ENCODE measurements at regions of chr13 and their contacts with region 1.

Region 1: DNA sequence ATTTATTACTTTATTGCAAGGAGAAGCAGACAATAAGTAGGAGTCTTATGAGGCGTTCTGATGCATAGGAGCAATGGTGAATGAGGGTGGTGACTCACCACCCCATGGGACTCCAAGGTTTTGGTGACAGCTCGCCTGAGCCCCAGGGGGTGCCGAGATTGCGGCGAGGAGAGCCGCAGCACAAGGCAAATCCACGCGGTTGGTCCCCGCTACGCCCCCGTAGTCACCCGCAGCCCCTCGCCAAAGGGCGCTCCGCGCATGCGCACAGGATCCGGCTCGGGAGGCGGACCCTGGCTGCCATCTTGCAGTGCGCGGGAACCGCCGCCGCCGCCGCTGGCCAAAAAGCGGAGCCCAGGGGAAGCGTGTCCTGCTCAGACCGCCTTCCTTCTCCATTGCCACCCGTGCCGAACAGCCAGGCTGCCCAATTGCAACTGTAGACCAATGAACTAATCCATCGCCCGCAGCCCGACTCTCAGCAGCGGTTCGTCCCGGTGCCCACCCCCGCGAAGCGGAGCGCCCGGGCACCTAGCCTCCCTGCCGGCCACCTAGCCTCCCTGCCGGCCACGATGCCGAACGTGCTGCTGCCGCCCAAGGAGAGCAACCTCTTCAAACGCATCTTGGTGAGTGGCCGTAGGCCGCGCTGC is at the start of gene NAA16:
- DNase-seq: peak; percentile 86
- H3K4me3 Mint-ChIP-seq: peak within 1 kb of the TSS; percentile 93
- H3K27ac Mint-ChIP-seq: peak within 1 kb of the TSS; percentile 86
- H3K4me1 Mint-ChIP-seq: peaks cover 13% of the 10 kb centered on the region
- H3K27me3 Mint-ChIP-seq: no peaks in the 10 kb centered on the region
- CTCF ChIP-seq: no peak
- total RNA-seq, gene NAA16: 13.8 and 14.2 TPM in 2 replicates

Region 2: DNA sequence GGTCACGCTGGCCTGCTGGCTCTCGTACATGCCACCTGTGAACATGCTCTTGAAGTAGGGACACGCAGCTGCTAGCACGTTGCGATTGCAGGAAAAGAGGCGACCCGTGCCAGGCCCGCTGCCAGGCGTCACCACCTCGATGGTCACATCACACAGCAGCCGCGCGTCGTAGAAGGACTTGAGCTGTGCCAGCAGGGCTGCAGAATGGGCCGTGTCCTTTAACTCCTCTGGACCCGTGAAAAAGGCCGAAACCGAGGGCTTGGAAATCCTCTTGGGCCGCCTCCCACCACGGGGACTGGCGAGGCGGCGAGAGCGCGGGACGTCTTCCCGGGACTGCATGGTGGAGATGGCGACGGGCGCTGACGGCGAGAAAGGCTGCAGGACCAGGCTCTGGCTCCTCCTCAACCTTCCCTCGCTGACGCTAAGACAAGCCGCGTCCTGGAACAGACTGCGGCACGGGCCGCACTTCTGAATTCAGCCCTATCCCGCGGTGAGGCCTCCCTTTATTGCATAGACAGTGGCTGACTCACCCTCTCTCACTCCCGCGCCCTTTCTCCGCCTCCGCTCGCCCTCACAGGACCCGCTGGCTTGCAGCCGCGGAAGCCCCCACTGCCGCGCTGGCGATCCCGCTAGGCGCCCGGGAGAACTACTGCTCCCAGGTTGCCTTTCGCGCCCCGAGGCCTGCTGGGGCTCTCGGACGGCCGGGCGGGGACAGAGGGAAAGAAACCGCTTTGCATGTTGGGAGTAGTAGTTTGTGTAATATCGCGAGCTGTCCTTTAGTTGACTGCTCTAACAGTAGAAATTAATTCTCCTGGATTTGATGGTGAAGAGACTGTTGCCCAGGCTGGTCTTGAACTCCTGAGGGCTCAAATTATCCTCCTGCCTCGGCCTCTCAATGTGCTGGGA is 116.9 kb before region 1 on chr13 and contains the start of gene KBTBD7:
- CTCF ChIA-PET with region 1: no interaction called
- POLR2A ChIA-PET with region 1: no interaction called
- intact Hi-C with region 1: no loop called
- DNase-seq: peak; percentile 84
- H3K4me3 Mint-ChIP-seq: peak within 1 kb of the TSS; percentile 81
- H3K27ac Mint-ChIP-seq: peak within 1 kb of the TSS; percentile 83
- H3K4me1 Mint-ChIP-seq: peaks cover 10% of the 10 kb centered on the region
- H3K27me3 Mint-ChIP-seq: no peaks in the 10 kb centered on the region
- CTCF ChIP-seq: no peak
- total RNA-seq, gene KBTBD7: 1.4 and 1.8 TPM in 2 replicates

Region 3: GRCh38 chr13:41222259-41222852 is 88.7 kb before region 1 on chr13:
- CTCF ChIA-PET with region 1: no interaction called
- POLR2A ChIA-PET with region 1: no interaction called
- intact Hi-C with region 1: loop called (anchors 5 kb)
- DNase-seq: peak; percentile 75
- H3K4me3 Mint-ChIP-seq: no peak overlapping the region
- H3K27ac Mint-ChIP-seq: no peak overlapping the region
- H3K4me1 Mint-ChIP-seq: peaks cover 7% of the 10 kb centered on the region
- H3K27me3 Mint-ChIP-seq: no peaks in the 10 kb centered on the region
- CTCF ChIP-seq: peak; percentile 71

Region 4: DNA sequence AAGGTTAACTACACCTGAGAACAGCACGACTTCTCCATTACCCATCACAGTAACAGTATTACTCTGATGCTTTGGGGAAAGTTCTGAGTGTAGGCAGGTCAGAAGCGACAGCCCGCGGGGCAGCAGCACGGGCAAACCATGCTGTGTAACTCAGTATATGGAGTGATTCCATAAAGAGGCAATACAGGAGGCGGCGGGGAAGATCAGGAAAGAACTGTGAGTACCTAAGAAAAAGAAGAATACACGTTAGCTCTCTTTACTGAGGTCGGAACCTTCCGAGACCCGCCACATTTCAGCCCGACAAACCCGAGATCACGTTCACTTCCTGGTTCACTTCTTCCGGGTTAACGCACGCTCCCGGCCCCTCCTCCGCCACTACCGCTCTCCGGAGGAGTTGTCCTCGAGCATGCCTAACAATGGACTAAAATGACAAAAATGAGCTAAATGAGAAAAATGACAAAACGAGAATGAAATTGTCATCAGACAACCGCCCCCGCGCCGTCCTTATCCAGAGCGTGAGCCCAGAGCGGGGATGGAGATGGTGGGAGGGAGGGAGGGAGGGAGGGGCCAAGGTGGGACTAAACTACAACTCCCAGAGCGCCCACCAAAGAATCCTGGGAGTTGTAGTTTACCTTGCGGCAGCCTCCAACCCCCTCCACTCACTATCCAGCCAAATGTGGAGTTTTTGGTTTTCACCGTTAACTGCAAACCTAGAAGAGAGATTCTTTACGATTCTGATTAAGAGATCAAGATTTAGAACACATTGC is 47.6 kb before region 1 on chr13 and contains the start of gene MTRF1:
- CTCF ChIA-PET with region 1: no interaction called
- POLR2A ChIA-PET with region 1: interaction called, 18 read pairs
- intact Hi-C with region 1: loop called (anchors 1 kb)
- DNase-seq: peak; percentile 85
- H3K4me3 Mint-ChIP-seq: peak within 1 kb of the TSS; percentile 92
- H3K27ac Mint-ChIP-seq: peak within 1 kb of the TSS; percentile 88
- H3K4me1 Mint-ChIP-seq: no peaks in the 10 kb centered on the region
- H3K27me3 Mint-ChIP-seq: no peaks in the 10 kb centered on the region
- CTCF ChIP-seq: no peak
- total RNA-seq, gene MTRF1: 10.3 and 11.7 TPM in 2 replicates

Region 5: DNA sequence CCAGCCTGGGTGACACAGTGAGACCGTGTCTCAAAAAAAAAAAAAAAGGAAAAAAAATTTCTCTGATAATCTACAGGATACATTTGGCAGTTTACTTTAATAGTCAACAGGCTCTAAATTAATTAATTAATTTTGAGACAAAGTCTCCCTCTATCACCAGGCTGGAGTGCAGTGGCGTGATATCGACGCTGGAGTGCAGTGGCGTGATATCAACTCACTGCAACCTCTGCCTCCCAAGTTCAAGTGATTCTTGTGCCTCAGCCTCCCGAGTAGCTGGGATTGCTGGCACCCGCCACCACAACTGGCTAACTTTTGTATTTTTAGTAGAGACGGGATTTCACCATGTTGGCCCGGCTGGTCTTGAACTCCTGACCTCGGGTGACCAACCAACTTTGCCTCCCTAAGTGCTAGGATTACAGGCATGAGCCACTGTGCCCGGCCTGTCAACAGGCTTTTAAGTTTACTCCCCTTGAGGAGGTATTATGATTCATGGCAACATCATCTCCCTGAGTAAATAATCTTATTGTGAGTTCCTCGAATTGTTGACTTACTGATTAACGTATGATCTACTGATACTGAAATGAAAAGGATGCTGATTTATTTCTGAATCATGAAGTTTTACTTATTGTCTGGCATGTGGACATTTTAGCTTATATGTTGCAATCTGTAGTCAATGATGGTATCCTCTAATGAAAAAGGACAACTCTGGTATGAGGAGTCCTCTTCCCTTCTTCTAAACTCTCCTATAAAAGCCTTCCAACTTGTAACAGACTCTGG is 26.4 kb before region 1 on chr13:
- CTCF ChIA-PET with region 1: no interaction called
- POLR2A ChIA-PET with region 1: interaction called, 4 read pairs
- intact Hi-C with region 1: loop called (anchors 2 kb)
- DNase-seq: peak; percentile 84
- H3K4me3 Mint-ChIP-seq: no peak overlapping the region
- H3K27ac Mint-ChIP-seq: peak overlapping the region; percentile 50
- H3K4me1 Mint-ChIP-seq: peaks cover 7% of the 10 kb centered on the region
- H3K27me3 Mint-ChIP-seq: no peaks in the 10 kb centered on the region
- CTCF ChIP-seq: no peak

Region 6: DNA sequence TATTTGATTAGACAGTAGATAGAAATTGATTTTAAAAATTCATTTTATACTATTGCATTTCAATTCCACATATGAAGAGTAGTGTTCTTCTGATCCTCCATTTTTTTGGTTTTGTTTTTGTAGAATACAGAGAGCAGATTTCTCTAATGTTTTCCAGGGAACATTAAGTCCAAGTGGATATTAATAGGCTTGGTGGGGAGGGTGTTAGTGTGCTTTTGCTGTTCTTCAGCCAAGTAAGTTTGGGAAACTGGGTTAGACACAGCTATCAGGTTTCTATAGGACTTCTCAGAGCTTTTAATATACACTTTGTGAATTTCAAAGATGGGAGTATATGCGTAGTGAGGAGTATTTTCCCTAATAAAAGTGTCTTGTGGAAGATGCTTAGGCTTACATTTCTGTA is 21.7 kb after region 1 on chr13:
- CTCF ChIA-PET with region 1: no interaction called
- POLR2A ChIA-PET with region 1: interaction called, 10 read pairs
- intact Hi-C with region 1: no loop called
- DNase-seq: no peak
- H3K4me3 Mint-ChIP-seq: no peak overlapping the region
- H3K27ac Mint-ChIP-seq: no peak overlapping the region
- H3K4me1 Mint-ChIP-seq: peaks cover 5% of the 10 kb centered on the region
- H3K27me3 Mint-ChIP-seq: no peaks in the 10 kb centered on the region
- CTCF ChIP-seq: no peak